HEK293T (cell line): ENCODE measurements at regions of chr6 and their contacts with region 1.

Region 1: DNA sequence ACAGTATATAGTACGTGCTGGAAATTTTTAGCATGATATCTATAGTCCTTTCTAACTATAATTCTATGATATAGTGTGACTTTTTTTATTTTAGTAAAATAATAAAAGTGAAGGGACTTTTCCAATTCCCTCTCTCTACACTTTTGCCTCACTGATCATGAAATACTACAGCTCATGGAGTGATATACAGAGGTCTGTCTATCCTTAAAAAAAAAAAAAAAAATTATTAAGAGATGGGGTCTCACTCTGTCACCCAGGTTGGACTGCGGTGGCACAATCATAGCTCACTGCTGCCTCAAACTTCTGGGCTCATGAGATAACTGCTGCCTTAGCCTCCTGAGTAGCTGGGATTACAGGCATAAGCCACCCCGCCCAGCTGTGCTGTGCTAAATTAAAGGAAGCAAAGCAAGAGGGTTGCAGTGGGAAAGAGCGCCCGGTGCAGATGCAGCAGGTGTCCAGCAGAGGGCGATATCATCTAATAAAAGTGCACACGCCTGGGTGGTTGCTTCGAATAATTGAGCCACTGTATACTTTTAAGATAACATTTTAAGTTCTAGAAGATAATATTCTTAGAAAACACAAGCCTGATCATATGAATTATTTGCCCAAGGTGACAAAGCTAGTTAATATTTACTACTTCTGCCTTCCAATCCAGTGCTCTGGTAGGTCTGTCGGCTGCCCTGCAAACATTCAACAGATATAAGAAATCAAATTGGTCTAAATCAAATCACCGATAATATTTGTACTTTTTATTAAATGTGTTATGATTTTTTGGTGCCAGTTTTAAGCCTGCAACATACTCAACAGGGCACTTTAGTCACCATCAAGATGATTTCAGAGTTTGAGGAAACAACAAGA is 94.9 kb upstream of the NT5E start:
- DNase-seq: peak; percentile 68

Region 2: GRCh38 chr6:84877515-84878210 is 477.3 kb before region 1 on chr6:
- CTCF ChIA-PET with region 1: interaction called, 10 read pairs
- POLR2A ChIA-PET with region 1: no interaction called
- DNase-seq: no peak

Region 3: DNA sequence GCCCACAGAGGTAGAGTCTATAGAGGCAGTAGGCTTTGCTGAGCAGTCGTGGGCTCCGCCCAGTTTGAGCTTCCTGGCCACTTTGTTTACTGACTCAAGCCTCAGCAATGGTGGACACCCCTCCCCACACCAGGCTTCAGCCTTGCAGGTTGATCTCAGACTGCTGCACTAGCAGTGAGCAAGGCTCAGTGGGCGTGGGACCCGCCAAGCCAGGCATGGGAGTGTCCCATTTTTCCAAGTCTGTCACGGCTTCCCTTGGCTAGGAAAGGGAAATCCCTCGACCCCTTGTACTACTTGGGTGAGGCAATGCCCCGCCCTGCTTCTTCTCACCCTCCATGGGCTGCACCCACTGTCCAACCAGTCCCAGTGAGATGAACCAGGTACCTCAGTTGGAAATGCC is 40.4 kb before region 1 on chr6:
- CTCF ChIA-PET with region 1: no interaction called
- POLR2A ChIA-PET with region 1: no interaction called
- DNase-seq: no peak

Region 4: GRCh38 chr6:85329196-85329595 is 25.8 kb before region 1 on chr6:
- CTCF ChIA-PET with region 1: no interaction called
- POLR2A ChIA-PET with region 1: no interaction called
- DNase-seq: no peak

Region 5: DNA sequence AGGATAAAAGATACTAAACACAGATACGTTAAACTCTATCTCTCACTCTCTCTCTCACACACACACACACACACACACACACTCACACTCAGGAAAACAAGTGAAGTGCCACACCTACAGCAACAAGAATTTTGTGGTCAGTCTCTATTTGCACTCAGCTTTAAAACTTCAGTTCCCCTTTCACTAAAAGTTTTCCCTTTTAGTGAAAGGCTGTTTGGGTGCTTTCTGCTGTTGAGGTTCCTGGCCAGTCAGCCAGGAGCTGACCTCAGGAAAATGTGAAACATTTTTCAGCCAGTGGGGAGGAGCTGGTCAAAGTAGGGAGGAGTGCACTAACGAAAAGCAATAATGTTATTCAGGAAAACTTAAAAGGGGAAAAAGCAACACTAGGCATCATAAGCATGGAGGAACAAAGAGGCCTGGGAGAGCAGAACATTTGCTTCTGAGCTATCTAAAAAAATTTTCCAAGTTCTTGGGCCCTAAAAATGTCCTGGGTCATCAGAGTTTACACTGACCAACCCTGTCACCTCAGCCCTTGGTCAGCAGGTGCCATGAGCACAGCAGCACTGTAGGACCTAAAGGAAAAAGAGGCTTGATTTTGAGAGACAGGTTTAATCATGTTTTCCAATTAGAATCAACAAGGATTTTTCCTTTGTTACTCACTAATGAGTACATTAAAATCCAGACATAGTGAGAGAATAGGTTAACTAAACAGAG is 64.2 kb after region 1 on chr6:
- CTCF ChIA-PET with region 1: no interaction called
- POLR2A ChIA-PET with region 1: no interaction called
- DNase-seq: no peak